ENCODE measurements at regions of chr3 and their contacts with region 1.

Region 1: DNA sequence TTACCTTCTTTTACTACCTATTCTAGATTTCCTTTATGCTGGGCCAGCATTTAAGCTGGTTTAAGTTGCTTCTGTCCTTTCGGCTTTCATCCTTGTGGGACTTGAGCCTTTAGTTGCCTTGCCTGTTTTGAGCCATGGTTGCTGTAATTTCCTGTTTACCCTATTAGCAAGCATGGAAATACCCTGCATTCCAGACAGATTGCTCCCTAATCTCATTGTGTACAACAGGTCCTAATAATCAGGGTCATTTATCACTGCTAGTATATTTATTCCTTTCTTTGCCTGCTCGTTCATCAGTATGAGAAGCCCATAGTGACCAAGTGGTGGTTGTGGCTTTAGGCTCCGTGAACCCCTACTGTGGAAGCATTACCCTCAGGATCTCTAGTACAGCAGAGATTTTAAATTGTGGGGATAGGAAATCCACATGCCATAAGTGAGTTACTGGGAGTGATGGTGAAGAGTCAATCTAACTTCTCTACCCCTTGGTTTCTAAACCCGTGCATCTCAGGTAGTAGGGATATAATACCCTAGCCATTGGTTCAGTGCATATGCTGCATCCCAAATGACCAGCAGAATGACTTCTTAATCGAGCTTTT is 31.9 kb downstream of the NCK1 start:
- DNase-seq: peak; percentile 94
- H3K4me3 ChIP-seq: peak overlapping the region in 1 of 3 experiments; percentile 3
- H3K27ac ChIP-seq: peak overlapping the region; percentile 92
- H3K4me1 ChIP-seq: peaks cover 40% of the 10 kb centered on the region
- H3K27me3 ChIP-seq: no peaks in the 10 kb centered on the region
- CTCF ChIP-seq: no peak
- POLR2A ChIP-seq: no peak

Region 2: DNA sequence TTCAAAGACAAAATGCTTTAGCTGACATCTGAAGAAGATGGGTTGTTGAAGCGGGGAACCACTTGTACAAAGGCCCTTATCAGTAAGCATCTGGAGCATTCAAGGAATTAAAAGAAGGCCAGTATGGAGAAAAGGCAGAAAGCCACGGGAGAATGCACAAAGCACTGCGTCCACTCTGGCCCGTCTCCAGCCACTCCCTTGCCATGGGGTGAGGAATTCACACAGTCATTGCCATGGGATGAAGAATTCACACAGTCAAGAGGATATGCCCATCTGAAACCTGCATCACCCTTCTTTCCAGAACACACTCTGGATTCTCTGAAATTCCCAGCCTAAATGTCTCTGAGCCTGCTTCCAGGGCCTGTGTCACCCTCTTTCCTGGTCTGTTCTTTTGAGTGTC is 115.1 kb before region 1 on chr3:
- CTCF ChIA-PET with region 1: no interaction called
- POLR2A ChIA-PET with region 1: no interaction called
- dilution Hi-C with region 1: no loop called
- intact Hi-C with region 1: no loop called
- DNase-seq: no peak
- H3K4me3 ChIP-seq: no peak overlapping the region
- H3K27ac ChIP-seq: no peak overlapping the region
- H3K4me1 ChIP-seq: no peaks in the 10 kb centered on the region
- H3K27me3 ChIP-seq: no peaks in the 10 kb centered on the region
- CTCF ChIP-seq: no peak
- POLR2A ChIP-seq: no peak

Region 3: DNA sequence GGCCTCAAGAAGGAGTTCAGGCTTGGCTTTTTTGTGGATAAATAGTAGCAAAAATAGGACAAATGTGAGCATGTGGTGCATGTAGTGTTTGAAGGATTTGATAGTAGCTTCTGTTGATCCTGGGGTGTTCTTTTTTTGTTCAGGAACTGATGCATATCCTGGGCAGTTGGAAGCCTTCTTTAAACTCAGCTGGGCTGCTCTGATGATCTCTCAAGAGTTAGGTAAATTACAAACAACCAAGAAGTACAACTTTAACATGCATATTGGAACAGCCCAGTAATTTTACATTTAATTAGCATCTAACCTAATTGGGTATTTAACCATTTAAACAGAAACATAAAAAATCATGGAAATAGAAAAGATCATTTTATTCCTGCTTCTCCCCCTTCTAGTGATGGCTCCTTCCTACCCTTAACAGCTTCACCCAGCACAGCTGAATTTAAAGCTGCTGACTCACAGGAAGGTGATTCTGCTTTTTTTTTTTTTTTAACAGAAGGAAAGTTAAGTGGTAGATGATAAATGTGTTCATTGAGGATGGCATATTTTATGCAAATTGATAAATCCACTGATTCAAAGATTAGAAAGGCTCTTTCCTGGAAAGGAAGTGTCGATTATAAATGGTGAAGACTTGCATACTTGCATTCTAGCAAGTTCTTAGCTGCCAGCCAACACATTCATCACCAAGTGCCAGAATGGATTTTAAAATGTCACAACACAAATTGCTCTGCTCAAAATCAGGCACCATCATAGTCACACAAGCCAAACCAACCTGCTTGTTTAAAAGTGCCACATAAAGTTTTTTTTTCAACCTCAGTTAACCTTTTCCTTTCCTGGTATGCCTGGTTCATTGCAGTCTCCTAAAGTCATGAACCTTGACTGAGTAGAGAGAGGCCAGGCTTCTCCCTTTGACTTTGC is 55.0 kb before region 1 on chr3:
- CTCF ChIA-PET with region 1: no interaction called
- POLR2A ChIA-PET with region 1: no interaction called
- dilution Hi-C with region 1: no loop called
- intact Hi-C with region 1: loop called (anchors 2 kb)
- DNase-seq: peak; percentile 88
- H3K4me3 ChIP-seq: peak overlapping the region in 1 of 3 experiments; percentile 33
- H3K27ac ChIP-seq: peak overlapping the region; percentile 86
- H3K4me1 ChIP-seq: peaks cover 54% of the 10 kb centered on the region
- H3K27me3 ChIP-seq: no peaks in the 10 kb centered on the region
- CTCF ChIP-seq: no peak
- POLR2A ChIP-seq: peak; percentile 25

Region 4: DNA sequence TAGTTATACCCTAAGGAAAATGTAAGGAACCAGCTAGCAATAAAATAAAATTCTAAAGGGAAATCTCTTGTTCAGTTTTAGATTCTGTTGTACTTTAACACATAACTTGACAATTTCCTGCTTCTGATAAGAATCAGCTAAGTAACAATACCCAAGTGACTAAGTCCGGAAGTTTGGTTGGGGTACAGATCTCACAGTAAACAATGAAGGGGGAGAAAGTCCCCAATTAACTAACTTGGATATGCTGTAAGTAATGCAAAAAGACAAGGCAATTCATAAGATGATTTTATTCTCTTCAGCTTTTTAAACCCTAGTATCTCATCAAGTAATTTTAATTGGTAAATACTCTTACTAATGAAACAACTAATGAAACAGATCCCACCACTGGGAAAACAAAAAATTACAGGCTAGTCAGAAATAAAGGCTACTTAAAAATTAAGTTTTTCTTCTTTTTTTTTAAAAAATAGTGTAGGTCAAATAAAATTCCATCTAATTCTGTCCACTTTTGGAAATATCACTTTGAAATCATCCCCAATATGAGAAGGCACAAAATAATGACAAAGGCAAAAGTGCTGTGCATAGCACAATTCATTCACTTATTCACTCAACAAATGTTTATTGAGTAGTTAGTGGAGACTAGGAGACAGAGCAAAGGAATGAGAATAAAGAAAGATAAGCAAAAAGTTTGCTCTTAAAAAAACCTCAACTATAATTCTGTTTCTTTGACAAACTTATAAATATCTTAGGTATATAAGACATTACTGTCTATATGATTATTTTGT is 26.0 kb after region 1 on chr3:
- CTCF ChIA-PET with region 1: no interaction called
- POLR2A ChIA-PET with region 1: no interaction called
- dilution Hi-C with region 1: no loop called
- intact Hi-C with region 1: loop called (anchors 1 kb)
- DNase-seq: peak; percentile 92
- H3K4me3 ChIP-seq: peak overlapping the region in 1 of 3 experiments; percentile 9
- H3K27ac ChIP-seq: peak overlapping the region; percentile 74
- H3K4me1 ChIP-seq: peaks cover 32% of the 10 kb centered on the region
- H3K27me3 ChIP-seq: no peaks in the 10 kb centered on the region
- CTCF ChIP-seq: no peak
- POLR2A ChIP-seq: peak; percentile 64

Region 5: DNA sequence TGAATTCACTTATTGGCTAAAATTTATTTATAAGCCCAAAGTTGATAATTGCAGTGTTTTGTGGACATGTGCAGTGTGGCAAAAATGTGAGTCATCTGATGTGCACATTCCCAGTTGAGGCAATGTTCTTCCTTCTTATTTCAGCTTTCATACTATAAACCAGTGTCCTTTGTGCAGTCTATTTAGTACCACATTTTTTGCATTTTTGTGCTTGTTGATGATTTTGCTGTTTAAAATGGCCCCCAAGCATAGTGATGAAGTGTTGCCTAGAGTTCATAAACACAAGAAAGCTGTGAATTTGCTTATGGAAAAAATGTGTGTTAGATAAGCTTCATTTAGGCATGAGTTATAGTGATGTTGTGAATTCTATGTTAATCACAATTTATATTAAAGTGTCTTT is 44.4 kb after region 1 on chr3:
- CTCF ChIA-PET with region 1: interaction called, 3 read pairs
- POLR2A ChIA-PET with region 1: no interaction called
- dilution Hi-C with region 1: no loop called
- intact Hi-C with region 1: loop called (anchors 5 kb)
- DNase-seq: no peak
- H3K4me3 ChIP-seq: no peak overlapping the region
- H3K27ac ChIP-seq: peak overlapping the region; percentile 62
- H3K4me1 ChIP-seq: peaks cover 27% of the 10 kb centered on the region
- H3K27me3 ChIP-seq: no peaks in the 10 kb centered on the region
- CTCF ChIP-seq: no peak
- POLR2A ChIP-seq: no peak

Measured in endothelial cell of umbilical vein (primary cell).